Breast epithelium (tissue), 4 donors: ENCODE measurements at regions of chr16 and their contacts with region 1.

Region 1: DNA sequence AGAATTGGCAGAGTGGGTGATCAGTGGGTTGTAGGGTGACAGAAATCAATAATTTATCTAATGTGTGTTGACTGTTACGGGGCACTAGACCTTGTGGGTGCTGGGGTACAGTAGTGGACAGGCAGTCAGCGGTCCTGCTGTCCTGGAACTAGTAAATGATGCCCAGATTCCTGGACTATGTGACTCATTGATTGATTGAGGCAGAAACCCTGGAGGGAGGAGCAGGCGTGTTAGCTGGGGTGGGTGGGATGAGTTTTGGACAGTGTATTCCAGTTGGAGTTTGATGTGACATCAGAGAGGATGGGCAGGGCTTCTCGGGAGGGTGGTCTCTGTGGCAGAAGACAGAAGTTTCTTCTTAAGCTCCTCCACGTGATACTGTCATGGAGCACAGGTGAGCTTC is 24.4 kb downstream of the PRMT7 start:
- DNase-seq: no peak
- H3K4me3 ChIP-seq: no peak overlapping the region
- H3K27ac ChIP-seq: no peak overlapping the region
- H3K4me1 ChIP-seq: peaks cover 0 to 4% of the 10 kb centered on the region in 2 donors
- H3K27me3 ChIP-seq: no peaks in the 10 kb centered on the region
- CTCF ChIP-seq: no peak
- POLR2A ChIP-seq: no peak

Region 2: GRCh38 chr16:67098599-67098998 is 1236.6 kb before region 1 on chr16:
- intact Hi-C with region 1: loop called (anchors 5 kb)
- DNase-seq: no peak
- H3K4me3 ChIP-seq: no peak overlapping the region
- H3K27ac ChIP-seq: no peak overlapping the region
- H3K4me1 ChIP-seq: no peaks in the 10 kb centered on the region
- H3K27me3 ChIP-seq: no peaks in the 10 kb centered on the region
- CTCF ChIP-seq: no peak
- POLR2A ChIP-seq: no peak

Region 3: DNA sequence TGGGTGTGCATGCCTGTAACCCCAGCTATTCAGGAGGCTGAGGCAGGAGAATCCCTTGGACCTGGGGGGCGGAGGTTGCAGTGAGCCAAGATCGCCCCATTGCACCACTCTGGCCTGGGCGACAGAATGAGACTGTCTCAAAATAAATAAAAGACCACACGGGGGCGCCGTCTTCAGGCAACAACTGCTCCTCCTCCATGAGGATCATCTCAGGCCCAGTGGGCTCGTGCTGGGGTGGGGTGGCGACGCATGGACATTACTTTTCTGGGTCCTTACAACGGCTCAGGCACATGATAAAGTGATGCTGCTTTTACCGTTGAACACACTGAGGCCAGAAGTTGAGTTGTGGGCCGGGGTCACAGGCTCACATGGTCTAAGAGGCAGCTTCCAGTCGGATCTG is 31.9 kb after region 1 on chr16:
- intact Hi-C with region 1: no loop called
- DNase-seq: no peak
- H3K4me3 ChIP-seq: no peak overlapping the region
- H3K27ac ChIP-seq: no peak overlapping the region
- H3K4me1 ChIP-seq: no peaks in the 10 kb centered on the region
- H3K27me3 ChIP-seq: no peaks in the 10 kb centered on the region
- CTCF ChIP-seq: peak in 1 of 3 donors; percentile 23
- POLR2A ChIP-seq: no peak